Sigmoid colon (tissue), 7 donors: ENCODE measurements at regions of chr17 and their contacts with region 1.

Region 1: GRCh38 chr17:27293898-27294688 is at the start of gene WSB1:
- DNase-seq: peak; percentile 97
- H3K4me3 ChIP-seq: peak within 1 kb of the TSS; percentile 67 to 87 (median 81)
- H3K27ac ChIP-seq: peak within 1 kb of the TSS; percentile 98 to 100 (median 100)
- H3K4me1 ChIP-seq: peaks cover 0 to 41% (median 34%) of the 10 kb centered on the region in 4 donors
- H3K27me3 ChIP-seq: no peaks in the 10 kb centered on the region
- CTCF ChIP-seq: no peak
- EP300 ChIP-seq: peak in 3 of 4 donors; percentile 4 to 82 (median 79)
- POLR2A ChIP-seq: peak; percentile 98 to 99
- total RNA-seq, gene WSB1: 111 to 240 (median 188) TPM

Region 2: DNA sequence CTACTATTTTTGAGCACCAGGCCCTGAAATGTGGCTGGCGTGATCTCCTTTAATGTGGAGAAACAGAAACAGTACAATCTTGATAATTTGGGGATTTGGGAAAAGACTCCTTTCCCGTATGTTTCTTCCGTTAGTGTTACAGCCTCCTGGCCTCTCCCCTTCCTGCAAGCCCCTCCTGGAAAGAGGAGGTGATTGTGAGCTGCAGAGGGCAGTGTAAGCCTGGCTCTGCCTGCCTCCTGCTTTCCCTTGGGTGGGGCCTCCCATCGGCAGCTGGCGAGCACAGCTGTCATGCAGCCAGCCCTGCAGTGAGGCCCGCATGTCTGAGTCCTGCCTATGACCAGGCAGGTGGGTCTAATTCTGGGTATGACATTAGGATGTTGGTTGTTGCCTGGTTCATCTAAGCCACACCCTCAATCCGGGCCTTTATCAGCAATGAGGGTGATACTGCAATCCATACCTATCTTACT is 48.8 kb before region 1 on chr17:
- intact Hi-C with region 1: loop called (anchors 1 kb)
- DNase-seq: peak; percentile 93
- H3K4me3 ChIP-seq: no peak overlapping the region
- H3K27ac ChIP-seq: peak overlapping the region; percentile 83 to 84 (median 83)
- H3K4me1 ChIP-seq: peaks cover 0 to 51% (median 45%) of the 10 kb centered on the region in 4 donors
- H3K27me3 ChIP-seq: no peaks in the 10 kb centered on the region
- CTCF ChIP-seq: peak; percentile 63 to 74 (median 72)
- EP300 ChIP-seq: no peak
- POLR2A ChIP-seq: no peak

Region 3: GRCh38 chr17:27276653-27277156 is 17.4 kb before region 1 on chr17:
- intact Hi-C with region 1: no loop called
- DNase-seq: no peak
- H3K4me3 ChIP-seq: no peak overlapping the region
- H3K27ac ChIP-seq: no peak overlapping the region
- H3K4me1 ChIP-seq: no peaks in the 10 kb centered on the region
- H3K27me3 ChIP-seq: no peaks in the 10 kb centered on the region
- CTCF ChIP-seq: no peak
- EP300 ChIP-seq: no peak
- POLR2A ChIP-seq: no peak

Region 4: DNA sequence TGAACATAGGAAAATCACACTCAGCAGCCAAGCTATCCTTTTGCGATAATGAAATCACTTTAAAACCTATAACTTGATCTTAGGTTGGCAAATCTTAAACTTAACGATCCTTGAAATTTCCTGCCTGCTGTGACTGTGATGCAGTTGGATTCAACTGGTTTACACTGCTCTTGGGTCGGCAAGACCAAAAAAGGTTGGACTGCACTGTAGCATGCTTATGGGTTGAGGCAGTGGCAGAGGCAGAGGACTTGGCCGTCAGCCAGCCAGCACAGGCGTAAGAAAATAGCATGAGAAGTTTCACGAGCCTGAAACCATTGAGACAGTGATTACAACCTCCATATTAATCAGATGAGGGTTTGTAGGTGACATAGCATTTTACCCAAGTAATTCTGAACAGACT is 21.2 kb after region 1 on chr17:
- intact Hi-C with region 1: loop called (anchors 2 kb)
- DNase-seq: peak; percentile 97
- H3K4me3 ChIP-seq: no peak overlapping the region
- H3K27ac ChIP-seq: peak overlapping the region; percentile 82 to 90 (median 88)
- H3K4me1 ChIP-seq: peaks cover 0 to 56% (median 35%) of the 10 kb centered on the region in 4 donors
- H3K27me3 ChIP-seq: no peaks in the 10 kb centered on the region
- CTCF ChIP-seq: no peak
- EP300 ChIP-seq: peak in 3 of 4 donors; percentile 72 to 97 (median 80)
- POLR2A ChIP-seq: no peak

Region 5: GRCh38 chr17:27332485-27333409 is 38.7 kb after region 1 on chr17:
- intact Hi-C with region 1: loop called (anchors 1 kb)
- DNase-seq: peak; percentile 99
- H3K4me3 ChIP-seq: peak overlapping the region; percentile 18 to 58 (median 53)
- H3K27ac ChIP-seq: peak overlapping the region; percentile 88 to 93 (median 91)
- H3K4me1 ChIP-seq: peaks cover 0 to 20% (median 19%) of the 10 kb centered on the region in 4 donors
- H3K27me3 ChIP-seq: no peaks in the 10 kb centered on the region
- CTCF ChIP-seq: peak; percentile 86 to 93 (median 90)
- EP300 ChIP-seq: peak in 2 of 4 donors; percentile 32 to 54
- POLR2A ChIP-seq: no peak

Region 6: DNA sequence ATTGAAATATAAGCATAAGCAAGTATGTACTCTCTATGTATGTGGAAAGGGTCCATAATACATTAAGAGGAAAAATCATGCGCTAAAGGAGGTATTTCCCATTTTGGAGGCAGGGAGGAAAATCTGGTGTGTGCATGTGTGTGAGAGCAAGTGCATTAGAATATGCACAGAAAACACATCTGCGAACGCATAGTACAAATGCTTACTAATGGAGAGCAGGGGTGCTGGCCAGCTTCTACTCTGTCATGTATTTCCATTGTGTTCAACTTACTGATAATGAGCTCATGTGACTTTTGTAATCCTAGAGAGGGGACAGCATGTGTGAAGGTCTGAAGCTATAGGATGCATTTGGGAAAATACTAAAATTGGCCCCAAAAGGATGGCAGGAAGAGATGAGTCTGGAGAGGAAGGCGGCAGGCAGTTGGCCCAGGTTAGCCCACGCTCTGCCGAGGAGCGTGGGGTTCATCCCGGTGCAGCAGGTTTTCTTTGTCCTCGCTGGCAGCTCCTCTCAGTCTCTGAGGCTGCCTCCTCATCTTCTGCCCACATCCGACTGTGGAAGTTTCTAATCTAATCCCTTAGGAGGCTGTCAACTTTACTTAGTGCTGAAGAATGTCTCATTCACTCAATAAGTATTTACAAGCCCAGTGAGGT is 144.4 kb after region 1 on chr17:
- intact Hi-C with region 1: no loop called
- DNase-seq: no peak
- H3K4me3 ChIP-seq: no peak overlapping the region
- H3K27ac ChIP-seq: no peak overlapping the region
- H3K4me1 ChIP-seq: no peaks in the 10 kb centered on the region
- H3K27me3 ChIP-seq: no peaks in the 10 kb centered on the region
- CTCF ChIP-seq: no peak
- EP300 ChIP-seq: no peak
- POLR2A ChIP-seq: no peak

Region 7: GRCh38 chr17:27473748-27474609 is 179.9 kb after region 1 on chr17:
- intact Hi-C with region 1: no loop called
- DNase-seq: peak; percentile 75
- H3K4me3 ChIP-seq: no peak overlapping the region
- H3K27ac ChIP-seq: peak overlapping the region in 2 of 4 donors; percentile 14 to 44
- H3K4me1 ChIP-seq: peaks cover 0 to 25% (median 19%) of the 10 kb centered on the region in 4 donors
- H3K27me3 ChIP-seq: no peaks in the 10 kb centered on the region
- CTCF ChIP-seq: no peak
- EP300 ChIP-seq: no peak
- POLR2A ChIP-seq: no peak